Naive thymus-derived CD8-positive, alpha-beta T cell (primary cell): ENCODE measurements at regions of chr18 and their contacts with region 1.

Region 1: GRCh38 chr18:49486953-49487710 is at the start of gene C18orf32:
- DNase-seq: peak; percentile 83 to 97 (median 93)
- ATAC-seq: peak; percentile 89 to 92
- H3K4me3 Mint-ChIP-seq: peak within 1 kb of the TSS; percentile 92 to 100 (median 96)
- H3K27ac Mint-ChIP-seq: peak within 1 kb of the TSS; percentile 94 to 99 (median 98)
- H3K4me1 Mint-ChIP-seq: peaks cover 27 to 76% (median 72%) of the 10 kb centered on the region in 4 donors
- H3K27me3 Mint-ChIP-seq: no peaks in the 10 kb centered on the region
- polyA plus RNA-seq, gene C18orf32: 64.3 to 82.2 (median 67.1) TPM

Region 2: DNA sequence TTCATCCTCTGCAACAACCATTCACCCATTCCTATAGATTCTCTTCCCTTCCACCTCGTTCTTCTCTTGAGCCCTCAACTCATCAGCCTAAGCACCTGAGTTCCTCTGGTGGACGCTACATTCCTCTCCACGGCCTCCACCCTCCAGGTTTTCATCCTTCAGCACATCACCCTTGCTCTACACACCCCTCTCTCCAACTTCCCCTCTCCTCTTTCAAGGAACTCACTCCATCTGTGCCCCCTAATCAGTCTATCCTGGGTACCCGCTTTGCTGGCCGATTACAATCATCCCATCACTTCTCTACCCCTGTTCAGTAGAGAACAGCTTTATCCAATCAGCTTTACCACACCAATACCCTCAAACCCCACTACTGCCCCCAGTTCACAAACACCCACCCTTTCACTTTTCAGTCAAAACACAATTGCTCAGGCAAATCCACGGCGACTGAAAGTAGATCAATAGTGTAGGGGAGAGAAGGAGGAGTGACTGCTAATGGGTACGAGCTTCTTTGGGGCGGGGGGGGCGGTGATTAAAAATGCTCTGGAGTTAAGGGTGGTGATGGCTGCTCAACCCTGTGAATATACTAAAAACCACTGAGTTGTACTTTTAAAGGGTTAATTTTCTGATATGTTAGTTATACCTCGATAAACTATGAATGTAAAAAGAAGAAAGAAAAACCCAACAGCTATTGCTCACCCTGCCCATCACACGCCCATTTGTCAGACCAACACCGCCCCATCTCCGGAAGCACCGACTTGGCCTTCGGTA is 27.5 kb before region 1 on chr18:
- POLR2A ChIA-PET with region 1: interaction called, 51 read pairs
- DNase-seq: peak in 2 of 10 donors; percentile 3 to 7
- ATAC-seq: peak; percentile 1 to 5
- H3K4me3 Mint-ChIP-seq: peak overlapping the region; percentile 83 to 97 (median 92)
- H3K27ac Mint-ChIP-seq: peak overlapping the region; percentile 45 to 96 (median 82)
- H3K4me1 Mint-ChIP-seq: peaks cover 22 to 58% (median 52%) of the 10 kb centered on the region in 4 donors
- H3K27me3 Mint-ChIP-seq: no peaks in the 10 kb centered on the region

Region 3: DNA sequence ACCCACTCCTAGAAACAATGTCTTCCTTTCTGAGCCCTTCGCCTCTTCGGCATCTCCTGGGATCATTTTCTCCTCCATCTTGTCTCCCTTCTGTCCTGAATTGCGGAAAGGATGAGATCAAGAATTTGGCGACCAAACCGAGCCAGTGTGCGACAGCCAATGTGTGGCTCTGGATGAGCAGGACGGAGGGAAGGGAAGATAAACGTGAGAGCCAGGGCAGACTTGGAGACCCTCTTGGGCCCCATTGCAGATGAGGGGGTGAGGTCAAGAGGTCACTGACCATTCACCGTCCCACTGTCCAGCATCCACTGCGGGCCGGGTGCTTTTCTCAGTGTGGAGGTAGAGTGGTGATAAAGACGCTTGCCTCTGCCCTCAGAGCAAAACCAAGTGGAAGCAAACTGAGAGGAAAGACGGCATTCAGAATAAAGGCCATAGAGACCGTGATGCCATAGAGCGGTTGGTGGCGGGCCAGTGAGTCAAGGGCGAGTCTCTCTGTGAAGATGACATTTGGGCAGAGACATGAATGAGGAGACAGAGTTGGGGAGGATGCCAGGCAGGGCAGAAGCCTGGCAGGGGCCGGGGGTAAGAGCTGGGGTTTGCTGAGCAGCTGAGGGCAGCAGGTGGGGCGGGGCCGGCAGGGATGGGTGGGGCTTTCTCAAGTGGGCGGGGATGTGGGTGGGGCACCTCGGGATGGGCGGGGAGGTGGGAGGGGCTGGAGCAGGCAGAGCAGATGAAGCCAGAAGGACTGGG is 270.6 kb after region 1 on chr18:
- POLR2A ChIA-PET with region 1: no interaction called
- DNase-seq: no peak
- ATAC-seq: no peak
- H3K4me3 Mint-ChIP-seq: no peak overlapping the region
- H3K27ac Mint-ChIP-seq: peak overlapping the region in 1 of 10 donors; percentile 17
- H3K4me1 Mint-ChIP-seq: peaks cover 0 to 5% (median 2%) of the 10 kb centered on the region in 4 donors
- H3K27me3 Mint-ChIP-seq: peaks cover 0 to 9% (median 0%) of the 10 kb centered on the region in 5 donors